Activated naive CD4-positive, alpha-beta T cell treated with anti-CD3 and anti-CD28 coated beads for 36 hours (primary cell): ENCODE measurements at regions of chr2 and their contacts with region 1.

Region 1: GRCh38 chr2:96602330-96602823 is 35.7 kb downstream of the KANSL3 start:
- DNase-seq: peak; percentile 26
- H3K4me3 Mint-ChIP-seq: no peak overlapping the region
- H3K27ac Mint-ChIP-seq: no peak overlapping the region
- H3K4me1 Mint-ChIP-seq: peaks cover 9% of the 10 kb centered on the region
- H3K27me3 Mint-ChIP-seq: no peaks in the 10 kb centered on the region

Region 2: DNA sequence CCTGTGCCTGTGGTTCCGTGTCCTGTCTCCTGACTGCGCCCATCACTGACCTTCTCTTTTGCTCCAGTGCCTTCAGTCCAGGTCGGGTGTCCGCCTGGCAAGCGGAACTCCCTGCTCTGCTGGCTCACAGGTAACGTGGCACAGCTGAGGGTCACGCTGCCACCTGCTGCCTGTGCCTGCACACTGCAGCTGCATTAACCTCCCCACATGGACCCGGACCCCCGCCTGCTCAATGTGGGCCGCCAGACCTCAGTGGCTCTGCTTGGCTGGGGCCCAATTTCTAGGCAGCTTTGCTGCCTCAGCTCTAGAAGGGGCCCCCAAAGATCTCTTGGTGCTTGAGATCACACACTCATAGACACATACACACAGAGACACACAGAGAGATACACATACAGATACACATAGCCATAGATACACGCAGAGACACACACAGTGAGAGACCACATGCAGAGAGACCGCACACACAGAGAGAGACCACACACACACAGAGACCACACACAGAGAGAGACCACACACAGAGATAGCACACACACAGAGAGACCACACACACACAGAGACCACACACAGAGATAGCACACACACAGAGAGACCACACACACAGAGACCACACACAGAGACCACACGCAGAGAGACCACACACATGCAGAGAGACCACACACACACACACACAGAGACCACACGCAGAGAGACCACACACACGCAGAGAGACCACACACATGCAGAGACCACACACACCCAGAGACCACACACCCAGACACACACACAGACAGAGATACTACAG is 198.8 kb after region 1 on chr2:
- CTCF ChIA-PET with region 1: interaction called, 4 read pairs
- intact Hi-C with region 1: loop called (anchors 5 kb)
- DNase-seq: peak; percentile 83
- H3K4me3 Mint-ChIP-seq: no peak overlapping the region
- H3K27ac Mint-ChIP-seq: no peak overlapping the region
- H3K4me1 Mint-ChIP-seq: peaks cover 2% of the 10 kb centered on the region
- H3K27me3 Mint-ChIP-seq: no peaks in the 10 kb centered on the region

Region 3: DNA sequence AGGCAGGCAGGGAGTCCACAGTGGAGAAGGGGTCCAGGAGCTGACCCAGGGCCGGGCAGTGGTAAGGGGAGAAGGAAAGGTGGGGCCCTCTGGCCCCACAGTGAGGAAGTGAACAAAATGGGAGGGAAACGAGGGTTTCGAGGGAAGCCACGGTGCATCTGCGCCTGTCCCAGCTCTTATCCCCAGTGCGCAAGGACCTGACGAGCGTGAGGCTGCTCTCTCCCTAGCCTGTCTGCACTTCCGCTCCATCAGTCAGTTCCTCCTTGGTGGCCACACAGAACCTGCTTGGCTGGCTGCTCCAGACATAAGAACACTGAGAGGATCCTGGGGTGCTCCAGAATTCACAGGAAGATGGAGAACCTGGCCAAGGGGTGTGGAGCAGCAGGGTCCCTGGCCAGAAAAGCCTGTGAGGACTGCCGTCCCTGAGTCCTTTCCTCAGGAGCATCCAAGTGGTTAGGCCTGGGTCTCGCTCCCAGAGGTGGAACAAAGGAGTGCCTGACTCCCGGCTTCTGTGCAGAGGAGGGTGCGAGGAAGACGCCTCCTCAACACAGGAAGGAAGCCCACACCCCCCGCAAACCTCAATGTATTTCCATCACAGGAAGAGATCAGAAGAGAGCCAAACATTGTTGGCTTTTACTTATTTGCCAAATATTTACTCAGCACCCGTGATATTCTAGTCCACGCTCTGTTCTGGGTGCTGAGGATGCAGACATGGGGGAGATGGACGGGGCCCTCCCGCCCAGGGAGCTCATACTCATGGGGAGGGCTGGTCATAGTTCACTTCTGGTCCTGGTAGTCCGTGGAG is 311.2 kb after region 1 on chr2:
- CTCF ChIA-PET with region 1: no interaction called
- intact Hi-C with region 1: no loop called
- DNase-seq: peak; percentile 75
- H3K4me3 Mint-ChIP-seq: peak overlapping the region; percentile 48
- H3K27ac Mint-ChIP-seq: peak overlapping the region; percentile 65
- H3K4me1 Mint-ChIP-seq: peaks cover 56% of the 10 kb centered on the region
- H3K27me3 Mint-ChIP-seq: no peaks in the 10 kb centered on the region